Esophagus muscularis mucosa (tissue), 4 donors: ENCODE measurements at regions of chr10 and their contacts with region 1.

Region 1: GRCh38 chr10:91389636-91390512 is 20.3 kb upstream of the HECTD2 start:
- DNase-seq: no peak
- H3K4me3 ChIP-seq: peak overlapping the region; percentile 21 to 34 (median 26)
- H3K27ac ChIP-seq: peak overlapping the region; percentile 26 to 58 (median 42)
- H3K4me1 ChIP-seq: peaks cover 0 to 14% (median 13%) of the 10 kb centered on the region in 4 donors
- H3K27me3 ChIP-seq: no peaks in the 10 kb centered on the region
- CTCF ChIP-seq: peak; percentile 56 to 62 (median 61)
- EP300 ChIP-seq: no peak
- POLR2A ChIP-seq: no peak

Region 2: DNA sequence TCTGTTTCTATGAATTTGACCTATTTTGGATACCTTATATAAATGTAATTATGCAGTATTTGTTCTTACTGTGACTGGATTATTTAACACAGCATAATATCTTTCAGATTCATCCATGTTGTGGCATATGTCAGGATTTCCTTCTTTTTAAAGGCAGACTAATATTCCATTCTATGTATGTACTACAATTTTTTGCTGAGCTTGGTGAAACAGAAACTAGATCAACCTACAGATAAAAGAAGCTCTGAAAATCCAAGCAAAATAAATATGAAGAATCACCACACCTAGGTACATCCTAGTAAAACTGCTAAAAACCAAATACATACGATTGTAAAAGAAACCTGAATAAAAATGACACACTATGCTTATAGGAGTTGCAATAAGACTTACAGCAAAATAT is 832.5 kb before region 1 on chr10:
- intact Hi-C with region 1: no loop called
- DNase-seq: no peak
- H3K4me3 ChIP-seq: no peak overlapping the region
- H3K27ac ChIP-seq: no peak overlapping the region
- H3K4me1 ChIP-seq: no peaks in the 10 kb centered on the region
- H3K27me3 ChIP-seq: no peaks in the 10 kb centered on the region
- CTCF ChIP-seq: no peak
- EP300 ChIP-seq: no peak
- POLR2A ChIP-seq: no peak

Region 3: DNA sequence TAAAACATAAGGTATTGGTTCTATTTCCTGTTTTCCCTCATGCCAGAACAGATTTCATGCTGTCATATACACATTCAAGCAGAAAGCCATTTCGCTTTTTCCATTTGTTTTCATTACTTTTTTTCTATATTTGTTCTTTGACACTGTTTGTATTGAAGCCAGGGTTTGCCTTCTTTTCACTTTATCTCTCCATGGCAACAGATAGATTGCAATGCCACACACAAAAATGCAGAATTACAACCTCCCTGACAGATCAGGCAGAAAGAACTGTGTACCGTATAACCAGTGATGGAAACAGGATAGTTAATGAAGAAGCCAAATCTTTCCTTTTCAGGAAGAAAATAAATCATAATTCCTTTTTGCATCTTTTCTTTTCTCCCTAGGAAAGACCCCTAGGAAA is 272.4 kb before region 1 on chr10:
- intact Hi-C with region 1: no loop called
- DNase-seq: no peak
- H3K4me3 ChIP-seq: no peak overlapping the region
- H3K27ac ChIP-seq: no peak overlapping the region
- H3K4me1 ChIP-seq: no peaks in the 10 kb centered on the region
- H3K27me3 ChIP-seq: no peaks in the 10 kb centered on the region
- CTCF ChIP-seq: no peak
- EP300 ChIP-seq: no peak
- POLR2A ChIP-seq: no peak

Region 4: DNA sequence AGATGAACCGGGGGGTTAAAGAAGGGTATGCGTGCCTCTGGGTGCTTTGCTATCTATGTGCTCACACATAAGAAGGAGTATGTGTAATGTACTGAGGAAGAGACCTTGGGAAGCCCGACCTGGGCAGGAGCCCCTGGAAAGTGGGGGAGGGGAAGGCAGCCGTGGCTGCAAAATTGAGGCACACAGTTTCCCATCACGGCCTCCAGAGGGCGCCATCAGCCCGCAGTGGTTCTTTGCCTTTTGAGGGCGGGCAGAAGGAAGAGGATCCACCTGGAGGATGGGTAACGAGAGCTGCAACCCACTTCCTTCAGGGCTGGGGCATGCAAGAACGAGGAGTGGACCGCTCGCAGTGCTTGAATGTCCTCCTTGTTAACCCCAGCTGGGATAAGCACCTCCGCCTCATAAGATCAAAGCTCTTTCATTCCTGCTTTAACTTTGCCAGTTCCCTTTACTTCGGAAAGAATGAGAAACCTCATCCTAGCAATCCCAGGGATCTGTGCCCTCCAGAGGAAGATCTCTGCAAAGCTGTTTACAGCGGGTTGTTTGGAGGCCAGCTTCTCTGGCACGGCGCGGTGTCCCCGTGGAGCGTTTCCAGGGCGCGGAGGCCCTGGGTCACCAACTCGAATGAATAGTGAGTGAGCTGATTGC is 91.5 kb before region 1 on chr10:
- intact Hi-C with region 1: loop called (anchors 5 kb)
- DNase-seq: no peak
- H3K4me3 ChIP-seq: peak overlapping the region; percentile 45 to 55 (median 52)
- H3K27ac ChIP-seq: peak overlapping the region; percentile 36 to 68 (median 50)
- H3K4me1 ChIP-seq: peaks cover 3 to 13% (median 13%) of the 10 kb centered on the region in 4 donors
- H3K27me3 ChIP-seq: peaks cover 0 to 5% (median 0%) of the 10 kb centered on the region in 4 donors
- CTCF ChIP-seq: peak; percentile 87 to 94 (median 91)
- EP300 ChIP-seq: no peak
- POLR2A ChIP-seq: no peak

Region 5: GRCh38 chr10:91409869-91410637 is 20.2 kb after region 1 on chr10 and contains the start of gene HECTD2:
- intact Hi-C with region 1: loop called (anchors 2 kb)
- DNase-seq: no peak
- H3K4me3 ChIP-seq: peak within 1 kb of the TSS; percentile 88 to 97 (median 92)
- H3K27ac ChIP-seq: peak within 1 kb of the TSS; percentile 99 to 100 (median 99)
- H3K4me1 ChIP-seq: peaks cover 10 to 50% (median 41%) of the 10 kb centered on the region in 4 donors
- H3K27me3 ChIP-seq: no peaks in the 10 kb centered on the region
- CTCF ChIP-seq: peak; percentile 46 to 62 (median 53)
- EP300 ChIP-seq: no peak
- POLR2A ChIP-seq: no peak
- total RNA-seq, gene HECTD2: 18.2 to 29.5 (median 21.5) TPM

Region 6: DNA sequence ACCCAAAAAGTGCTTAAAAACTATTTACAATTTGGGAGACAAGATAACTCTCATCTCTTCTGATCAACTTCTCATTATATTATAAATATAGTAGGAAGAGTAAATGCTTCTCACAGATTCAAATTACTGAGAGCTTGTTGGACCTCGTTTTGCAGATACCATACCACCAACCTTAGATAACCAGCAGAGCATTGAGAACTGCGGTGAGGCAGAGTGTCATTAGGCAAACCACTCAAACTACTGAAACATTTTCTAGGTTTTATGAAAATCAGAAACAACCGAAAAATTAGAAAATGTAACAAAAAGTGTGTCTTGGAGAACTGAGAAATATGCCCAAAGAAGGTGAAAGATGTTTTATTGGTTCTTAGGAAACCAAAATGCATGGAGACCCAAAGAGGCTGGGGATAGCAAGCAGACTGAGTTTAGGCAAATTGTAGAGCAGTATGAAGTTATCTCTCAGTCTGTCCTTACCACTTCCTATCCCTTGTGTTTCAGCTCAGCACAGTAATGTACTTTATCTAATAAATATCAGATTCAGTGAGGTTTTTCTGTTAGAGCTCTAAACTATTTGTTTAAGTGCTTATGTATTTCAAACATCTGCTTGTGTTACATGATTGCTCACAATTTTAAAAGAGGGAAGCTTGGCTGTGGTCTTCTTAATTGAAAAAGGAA is 98.2 kb after region 1 on chr10:
- intact Hi-C with region 1: loop called (anchors 10 kb)
- DNase-seq: no peak
- H3K4me3 ChIP-seq: no peak overlapping the region
- H3K27ac ChIP-seq: no peak overlapping the region
- H3K4me1 ChIP-seq: no peaks in the 10 kb centered on the region
- H3K27me3 ChIP-seq: no peaks in the 10 kb centered on the region
- CTCF ChIP-seq: no peak
- EP300 ChIP-seq: no peak
- POLR2A ChIP-seq: no peak